Activated B cell treated with CpG ODN at 0.5 μM for 24 hours (primary cell): ENCODE measurements at regions of chr3 and their contacts with region 1.

Region 1: GRCh38 chr3:109081746-109082510 is 36.0 kb downstream of the MORC1 start:
- DNase-seq: peak; percentile 23
- ATAC-seq: peak; percentile 97
- H3K4me3 Mint-ChIP-seq: no peak overlapping the region
- H3K27ac Mint-ChIP-seq: no peak overlapping the region
- H3K4me1 Mint-ChIP-seq: peaks cover 6% of the 10 kb centered on the region
- H3K27me3 Mint-ChIP-seq: peaks cover 9% of the 10 kb centered on the region
- CTCF ChIP-seq: no peak

Region 2: GRCh38 chr3:109050591-109051167 is 31.2 kb before region 1 on chr3:
- CTCF ChIA-PET with region 1: interaction called, 3 read pairs
- POLR2A ChIA-PET with region 1: no interaction called
- intact Hi-C with region 1: loop called (anchors 1 kb)
- DNase-seq: no peak
- ATAC-seq: peak; percentile 42
- H3K4me3 Mint-ChIP-seq: no peak overlapping the region
- H3K27ac Mint-ChIP-seq: no peak overlapping the region
- H3K4me1 Mint-ChIP-seq: no peaks in the 10 kb centered on the region
- H3K27me3 Mint-ChIP-seq: no peaks in the 10 kb centered on the region
- CTCF ChIP-seq: peak; percentile 34